ENCODE measurements at regions of chr12 and their contacts with region 1.

Region 1: GRCh38 chr12:9813821-9814809 is 13.2 kb upstream of the KLRF1 start:
- DNase-seq: peak; percentile 98
- H3K4me3 Mint-ChIP-seq: peak overlapping the region; percentile 91
- H3K27ac Mint-ChIP-seq: peak overlapping the region; percentile 75
- H3K4me1 Mint-ChIP-seq: peaks cover 26% of the 10 kb centered on the region
- H3K27me3 Mint-ChIP-seq: peaks cover 24% of the 10 kb centered on the region

Region 2: DNA sequence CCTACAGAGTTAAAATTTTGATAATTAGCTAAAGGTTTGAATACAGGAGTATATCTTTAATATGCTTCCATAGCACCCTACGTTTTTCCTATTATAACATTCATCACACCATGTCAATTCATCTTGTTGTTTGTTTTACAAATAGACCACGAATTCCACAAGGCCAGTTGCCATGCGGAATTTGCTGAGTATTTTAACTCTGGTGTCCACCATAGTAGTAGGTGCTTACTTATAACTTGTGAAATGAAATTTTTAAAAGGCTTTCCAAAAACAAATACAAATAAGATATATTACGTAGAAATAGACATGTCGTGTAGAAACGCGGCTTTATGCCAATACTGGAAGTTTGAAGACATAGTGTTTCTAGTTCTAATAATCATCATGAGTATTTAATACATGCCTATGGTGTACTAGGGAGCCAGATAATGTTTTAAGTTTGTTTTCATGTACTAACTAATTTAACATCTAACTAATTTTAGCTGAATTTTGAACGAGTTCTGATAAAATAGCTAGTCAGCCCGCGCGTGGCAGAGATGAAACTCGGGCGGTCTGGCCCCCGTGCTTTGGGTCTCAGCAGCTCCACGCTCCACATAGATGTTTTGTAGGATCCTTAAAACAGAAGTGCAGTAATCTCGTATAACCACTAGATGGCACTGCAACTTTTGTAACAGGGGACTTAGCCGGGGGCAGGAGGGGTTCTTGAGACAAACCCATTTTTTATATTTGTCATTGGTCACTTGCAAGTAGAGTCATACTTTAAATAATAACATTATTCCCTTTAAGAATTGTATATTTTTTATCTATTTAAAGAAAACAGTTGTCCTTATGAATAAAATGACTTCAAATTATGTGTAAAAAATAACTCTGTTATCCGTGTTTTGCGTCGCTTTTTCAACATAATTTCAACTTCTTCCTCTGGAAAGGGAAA is 63.6 kb before region 1 on chr12:
- intact Hi-C with region 1: loop called (anchors 1 kb)
- DNase-seq: peak; percentile 89
- H3K4me3 Mint-ChIP-seq: peak overlapping the region; percentile 55
- H3K27ac Mint-ChIP-seq: peak overlapping the region; percentile 70
- H3K4me1 Mint-ChIP-seq: peaks cover 46% of the 10 kb centered on the region
- H3K27me3 Mint-ChIP-seq: no peaks in the 10 kb centered on the region

Region 3: GRCh38 chr12:9925708-9926393 is 111.7 kb after region 1 on chr12:
- intact Hi-C with region 1: loop called (anchors 1 kb)
- DNase-seq: peak; percentile 73
- H3K4me3 Mint-ChIP-seq: peak overlapping the region; percentile 52
- H3K27ac Mint-ChIP-seq: no peak overlapping the region
- H3K4me1 Mint-ChIP-seq: peaks cover 21% of the 10 kb centered on the region
- H3K27me3 Mint-ChIP-seq: peaks cover 16% of the 10 kb centered on the region

Region 4: GRCh38 chr12:9940375-9940774 is 126.3 kb after region 1 on chr12:
- intact Hi-C with region 1: loop called (anchors 5 kb)
- DNase-seq: peak; percentile 74
- H3K4me3 Mint-ChIP-seq: no peak overlapping the region
- H3K27ac Mint-ChIP-seq: no peak overlapping the region
- H3K4me1 Mint-ChIP-seq: peaks cover 22% of the 10 kb centered on the region
- H3K27me3 Mint-ChIP-seq: peaks cover 28% of the 10 kb centered on the region

Region 5: DNA sequence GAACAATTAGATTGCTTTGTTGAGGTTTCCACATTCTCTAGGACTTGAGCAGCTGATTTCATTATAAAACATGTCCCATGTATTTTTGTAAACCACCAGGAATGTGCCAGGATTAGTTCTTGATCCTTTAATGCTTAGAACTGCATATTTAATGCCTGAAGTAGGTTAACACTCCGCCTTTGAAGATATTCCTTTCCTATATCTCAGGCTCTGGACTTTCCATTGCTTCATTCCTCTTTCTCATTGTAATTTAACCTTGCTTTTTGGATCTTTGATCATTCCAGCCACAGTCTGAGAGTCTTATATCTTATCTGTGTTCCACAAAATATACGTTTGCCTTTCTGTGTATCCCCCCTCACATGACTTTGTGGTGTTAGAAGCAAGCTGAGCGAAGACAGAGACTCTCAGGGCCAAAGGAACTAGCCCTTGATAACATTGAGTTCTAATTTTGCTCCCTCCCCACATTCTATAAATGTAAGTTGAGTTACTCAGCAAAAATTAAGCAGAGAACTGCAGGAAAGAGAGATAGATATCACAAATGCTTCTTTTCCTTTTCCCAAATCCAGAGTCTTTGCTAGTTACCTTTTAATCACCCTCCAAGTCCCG is 187.2 kb after region 1 on chr12:
- intact Hi-C with region 1: loop called (anchors 10 kb)
- DNase-seq: no peak
- H3K4me3 Mint-ChIP-seq: no peak overlapping the region
- H3K27ac Mint-ChIP-seq: no peak overlapping the region
- H3K4me1 Mint-ChIP-seq: no peaks in the 10 kb centered on the region
- H3K27me3 Mint-ChIP-seq: peaks cover 50% of the 10 kb centered on the region

Region 6: GRCh38 chr12:10140001-10140400 is 325.9 kb after region 1 on chr12:
- intact Hi-C with region 1: loop called (anchors 2 kb)
- DNase-seq: peak; percentile 82
- H3K4me3 Mint-ChIP-seq: no peak overlapping the region
- H3K27ac Mint-ChIP-seq: no peak overlapping the region
- H3K4me1 Mint-ChIP-seq: no peaks in the 10 kb centered on the region
- H3K27me3 Mint-ChIP-seq: peaks cover 38% of the 10 kb centered on the region

Region 7: DNA sequence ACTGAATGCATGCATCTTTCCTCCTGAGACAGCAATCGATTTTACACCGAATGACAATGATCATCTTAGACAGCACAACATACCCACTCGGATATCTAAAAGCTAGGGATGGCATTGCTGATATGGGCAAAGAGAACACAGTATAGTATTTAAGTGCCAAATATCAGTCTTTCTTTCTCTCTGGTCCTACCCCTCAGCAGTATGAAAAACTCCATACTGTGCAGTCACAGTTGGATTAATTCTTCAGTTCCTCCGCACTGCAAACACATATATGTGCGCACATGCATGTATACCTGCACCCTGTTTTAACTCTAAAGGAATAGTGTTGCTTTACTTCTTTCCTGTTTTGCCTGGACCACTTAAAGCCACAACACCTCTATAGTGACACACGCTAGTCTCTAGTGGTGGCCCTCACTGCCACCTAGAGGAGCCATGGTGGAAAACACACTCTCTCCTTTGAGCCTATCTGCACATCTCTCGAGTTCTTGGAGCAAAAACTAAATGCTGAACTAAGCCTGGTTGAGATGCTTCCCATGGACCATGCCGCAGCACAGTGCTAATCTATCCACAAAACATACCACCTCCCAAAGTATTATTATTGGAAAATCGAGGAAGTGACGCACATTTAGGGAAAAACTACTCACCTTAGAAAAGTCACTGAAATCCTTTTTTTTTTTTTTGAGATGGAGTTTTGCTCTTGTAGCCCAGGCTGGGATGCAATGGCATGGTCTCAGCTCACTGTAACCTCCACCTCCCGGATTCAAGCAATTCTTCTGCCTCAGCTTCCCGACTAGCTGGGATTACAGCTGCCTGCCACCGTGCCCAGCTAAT is 376.7 kb after region 1 on chr12:
- intact Hi-C with region 1: loop called (anchors 5 kb)
- DNase-seq: peak; percentile 83
- H3K4me3 Mint-ChIP-seq: no peak overlapping the region
- H3K27ac Mint-ChIP-seq: no peak overlapping the region
- H3K4me1 Mint-ChIP-seq: peaks cover 4% of the 10 kb centered on the region
- H3K27me3 Mint-ChIP-seq: peaks cover 24% of the 10 kb centered on the region